Breast epithelium (tissue), 4 donors: ENCODE measurements at regions of chr5 and their contacts with region 1.

Region 1: DNA sequence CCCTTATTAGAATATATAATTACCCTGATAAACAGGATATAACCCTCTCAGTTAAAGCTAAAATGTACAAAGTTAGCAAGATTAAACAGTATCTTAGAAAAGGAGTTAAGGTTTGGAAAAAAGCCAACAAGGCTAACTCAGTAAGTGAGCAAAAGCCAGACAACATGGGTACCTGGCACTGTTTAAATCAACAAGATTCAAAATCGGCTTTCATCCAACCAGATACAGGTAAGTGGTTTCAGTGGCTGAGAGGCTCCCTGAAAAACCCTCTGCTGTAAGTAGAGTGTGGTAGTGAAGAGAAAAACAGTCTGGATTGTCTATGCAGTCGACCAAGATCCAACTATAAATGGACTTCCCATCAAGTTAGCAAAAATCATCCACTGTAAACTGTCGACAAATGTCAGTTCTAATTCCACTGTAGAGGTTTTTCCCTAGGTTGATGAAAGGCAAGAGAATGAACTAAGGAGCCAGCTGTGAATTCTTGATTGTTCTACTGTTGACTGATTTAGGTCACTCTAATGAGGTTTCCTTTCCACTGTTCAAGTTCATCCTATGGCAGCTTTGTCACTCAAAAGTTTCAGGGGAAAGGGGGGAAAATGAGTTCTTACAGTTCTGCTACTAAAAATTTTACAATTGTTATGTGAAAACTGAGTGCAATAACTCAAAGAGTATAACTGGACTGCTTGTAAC is 27.3 kb downstream of the ETF1 start:
- DNase-seq: no peak
- H3K4me3 ChIP-seq: no peak overlapping the region
- H3K27ac ChIP-seq: no peak overlapping the region
- H3K4me1 ChIP-seq: no peaks in the 10 kb centered on the region
- H3K27me3 ChIP-seq: no peaks in the 10 kb centered on the region
- CTCF ChIP-seq: no peak
- POLR2A ChIP-seq: no peak

Region 2: DNA sequence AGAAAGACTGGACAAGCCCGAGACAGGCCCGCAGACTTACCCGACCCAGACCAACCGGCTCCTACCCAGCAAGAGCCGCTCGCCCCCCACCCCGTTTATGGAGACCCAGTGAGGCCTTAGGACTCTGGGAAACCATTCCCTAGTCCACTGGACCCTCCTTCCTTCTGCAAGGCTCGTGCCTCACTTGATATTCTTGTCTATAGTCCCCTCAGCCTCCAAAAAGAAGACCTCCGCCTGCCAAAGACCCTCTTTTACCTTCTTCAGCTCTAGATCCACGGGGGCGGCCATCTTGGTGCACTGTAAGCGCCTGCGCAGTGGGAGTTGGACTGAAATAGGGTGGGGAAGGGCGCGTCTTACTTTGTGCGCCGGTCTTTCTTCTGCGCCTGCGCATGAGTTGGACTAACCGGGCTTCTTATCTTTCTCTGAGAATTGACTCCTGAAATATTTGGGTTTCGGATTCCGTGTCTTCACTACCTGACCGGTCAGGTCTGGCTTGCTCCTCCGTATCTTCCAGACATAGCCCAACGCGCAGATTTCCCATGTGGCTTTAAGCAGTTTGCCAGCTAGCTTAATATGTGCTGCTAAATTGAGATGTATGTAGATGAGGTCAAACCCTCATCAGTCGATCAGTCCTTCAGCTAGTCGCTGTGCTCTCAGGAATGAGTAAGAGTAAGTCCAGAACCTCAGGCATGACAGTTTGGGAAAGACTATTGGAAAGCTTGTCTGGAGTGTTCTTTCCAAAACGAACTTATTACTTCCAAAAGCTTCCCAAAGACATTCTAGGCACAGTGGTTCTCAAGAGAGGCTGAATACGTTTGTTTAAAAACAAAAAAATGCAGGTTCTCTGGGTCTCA is 1787.3 kb after region 1 on chr5 and contains the start of gene PFDN1:
- intact Hi-C with region 1: loop called (anchors 10 kb)
- DNase-seq: peak; percentile 87 to 88
- H3K4me3 ChIP-seq: peak within 1 kb of the TSS; percentile 71 to 83 (median 83)
- H3K27ac ChIP-seq: peak within 1 kb of the TSS; percentile 78 to 93
- H3K4me1 ChIP-seq: peaks cover 0 to 5% of the 10 kb centered on the region in 2 donors
- H3K27me3 ChIP-seq: no peaks in the 10 kb centered on the region
- CTCF ChIP-seq: no peak
- POLR2A ChIP-seq: peak; percentile 4
- total RNA-seq, gene PFDN1: 72.2 to 93.4 (median 86.3) TPM